Astrocyte of the cerebellum (primary cell): ENCODE measurements at regions of chr5 and their contacts with region 1.

Region 1: DNA sequence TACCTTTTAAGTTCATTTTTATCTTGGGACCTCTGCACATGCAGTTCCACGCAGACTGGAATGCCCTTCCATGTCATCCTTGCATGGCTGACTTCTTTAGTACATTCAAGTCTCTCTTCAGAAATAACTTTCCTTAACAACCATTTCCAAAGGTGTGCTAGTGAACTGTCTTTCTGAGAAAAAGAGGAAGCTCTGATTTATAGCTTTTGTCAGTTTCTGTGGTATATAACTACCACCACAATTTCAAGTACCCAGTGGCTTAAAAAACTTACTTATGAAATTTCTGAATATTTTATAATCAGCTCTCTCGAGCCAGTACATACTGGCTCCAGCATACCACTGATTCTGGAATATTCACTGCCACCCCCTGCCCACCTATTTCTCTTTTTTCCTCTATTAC is 1613.8 kb downstream of the MAT2B start:
- DNase-seq: no peak
- H3K4me3 ChIP-seq: no peak overlapping the region
- CTCF ChIP-seq: no peak

Region 2: DNA sequence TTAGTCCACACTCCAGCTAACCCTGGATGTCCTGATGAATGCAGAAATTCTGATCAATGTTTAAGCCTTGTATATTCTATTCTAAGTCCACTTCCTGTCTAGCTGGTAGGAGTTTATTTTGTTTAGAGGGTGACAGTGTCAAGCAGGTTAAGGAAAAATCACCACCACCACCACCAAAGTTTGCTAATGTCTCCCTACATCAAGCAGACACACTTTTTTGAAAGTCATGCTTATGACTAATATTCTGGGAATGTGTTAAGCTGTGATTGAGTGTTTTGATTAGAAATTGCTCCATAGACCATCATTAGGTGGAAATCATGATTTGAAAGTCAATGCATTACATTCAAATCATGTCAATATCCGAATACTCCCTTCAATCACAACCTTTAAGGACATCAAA is 83.7 kb before region 1 on chr5:
- in situ Hi-C with region 1: loop called (anchors 5 kb)
- DNase-seq: no peak
- H3K4me3 ChIP-seq: no peak overlapping the region
- CTCF ChIP-seq: no peak